Sigmoid colon (tissue), 7 donors: ENCODE measurements at regions of chr13 and their contacts with region 1.

Region 1: DNA sequence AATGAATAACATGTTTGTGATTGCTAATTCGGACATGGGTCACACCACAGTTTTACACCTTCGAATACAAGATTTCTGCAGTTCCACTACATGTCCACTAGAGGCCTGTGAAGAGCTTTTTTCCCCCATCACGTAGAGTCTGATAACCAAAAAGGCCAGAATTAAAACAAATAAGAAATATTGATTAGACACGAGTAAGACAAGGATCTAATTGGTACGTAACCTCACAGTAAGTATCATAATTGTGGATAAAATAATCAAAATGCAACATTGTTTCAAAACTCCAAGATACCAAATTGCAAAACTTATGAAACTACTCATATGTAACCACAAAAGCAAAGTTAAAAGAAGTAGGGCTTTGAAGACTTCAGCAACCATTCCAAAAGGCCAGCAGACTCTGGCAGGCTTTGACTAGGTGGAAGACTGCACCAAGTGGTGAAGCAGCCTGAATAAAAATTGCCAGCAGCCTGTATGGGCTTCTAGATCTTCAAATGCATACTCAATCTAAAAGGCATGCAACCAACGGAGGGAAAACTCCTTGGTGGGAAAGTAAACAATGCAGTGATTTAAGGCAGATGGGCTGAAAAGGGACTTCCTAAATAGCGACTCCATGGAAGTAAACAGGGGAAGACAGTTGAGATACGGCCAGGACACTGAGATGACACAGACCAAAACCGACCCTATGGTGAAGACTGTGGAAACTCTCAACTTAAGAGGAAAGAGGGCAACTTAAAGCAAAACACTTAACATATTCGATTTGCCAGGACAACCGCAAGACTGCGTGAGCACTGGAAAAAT is 56.7 kb downstream of the STARD13 start:
- DNase-seq: no peak
- H3K4me3 ChIP-seq: no peak overlapping the region
- H3K27ac ChIP-seq: peak overlapping the region; percentile 66 to 80 (median 71)
- H3K4me1 ChIP-seq: peaks cover 0 to 65% (median 54%) of the 10 kb centered on the region in 4 donors
- H3K27me3 ChIP-seq: no peaks in the 10 kb centered on the region
- CTCF ChIP-seq: peak; percentile 80 to 87 (median 82)
- EP300 ChIP-seq: no peak
- POLR2A ChIP-seq: no peak

Region 2: DNA sequence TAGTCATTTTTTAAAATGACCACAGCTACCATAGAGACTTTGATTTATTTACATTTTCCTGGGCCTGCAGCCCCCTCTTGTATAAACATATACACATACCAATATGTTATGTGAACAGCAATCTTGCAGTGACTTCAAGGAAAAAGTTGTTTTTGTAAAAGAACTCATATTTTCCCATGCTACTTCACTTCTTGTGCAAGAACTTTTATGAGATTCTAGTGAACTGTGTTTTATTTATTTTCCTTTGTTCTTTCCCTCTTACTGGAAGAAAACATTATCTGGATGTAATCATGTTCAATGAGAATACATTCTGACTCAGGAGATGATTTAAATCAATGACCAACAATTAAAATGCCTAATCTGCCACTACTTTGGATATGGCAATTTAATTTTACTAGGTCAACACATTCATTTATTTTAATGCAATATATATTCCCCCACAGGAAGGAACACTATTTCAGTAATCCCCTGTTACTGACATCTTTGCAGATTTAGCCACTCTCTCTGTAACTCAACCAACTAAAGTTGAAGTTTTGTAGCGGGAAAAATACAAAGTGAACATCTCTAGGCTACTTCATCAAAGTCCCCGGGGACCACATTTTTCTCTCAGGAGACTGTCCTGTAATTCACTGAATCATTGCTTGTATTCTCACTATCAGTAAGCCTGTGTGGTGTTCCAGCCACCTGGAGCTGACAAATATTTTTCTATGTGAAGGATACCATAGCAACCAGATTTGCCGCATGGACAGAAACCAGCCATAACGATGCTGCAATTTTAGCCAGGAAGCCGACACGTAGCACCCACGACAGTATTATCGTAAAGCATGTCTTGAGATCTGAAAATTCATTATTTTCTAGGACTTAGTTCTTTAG is 33.8 kb before region 1 on chr13:
- intact Hi-C with region 1: no loop called
- DNase-seq: no peak
- H3K4me3 ChIP-seq: no peak overlapping the region
- H3K27ac ChIP-seq: peak overlapping the region; percentile 51 to 88 (median 76)
- H3K4me1 ChIP-seq: peaks cover 0 to 99% (median 90%) of the 10 kb centered on the region in 4 donors
- H3K27me3 ChIP-seq: no peaks in the 10 kb centered on the region
- CTCF ChIP-seq: no peak
- EP300 ChIP-seq: peak in 1 of 4 donors; percentile 44
- POLR2A ChIP-seq: no peak

Region 3: GRCh38 chr13:33349986-33350826 is 121.4 kb after region 1 on chr13:
- intact Hi-C with region 1: loop called (anchors 5 kb)
- DNase-seq: peak; percentile 88
- H3K4me3 ChIP-seq: peak overlapping the region; percentile 62 to 81 (median 71)
- H3K27ac ChIP-seq: peak overlapping the region; percentile 88 to 96 (median 93)
- H3K4me1 ChIP-seq: peaks cover 0 to 44% (median 25%) of the 10 kb centered on the region in 4 donors
- H3K27me3 ChIP-seq: no peaks in the 10 kb centered on the region
- CTCF ChIP-seq: no peak
- EP300 ChIP-seq: no peak
- POLR2A ChIP-seq: peak; percentile 4 to 20

Region 4: GRCh38 chr13:33441015-33441414 is 212.2 kb after region 1 on chr13:
- intact Hi-C with region 1: loop called (anchors 10 kb)
- DNase-seq: no peak
- H3K4me3 ChIP-seq: no peak overlapping the region
- H3K27ac ChIP-seq: no peak overlapping the region
- H3K4me1 ChIP-seq: peaks cover 0 to 33% (median 21%) of the 10 kb centered on the region in 4 donors
- H3K27me3 ChIP-seq: no peaks in the 10 kb centered on the region
- CTCF ChIP-seq: no peak
- EP300 ChIP-seq: no peak
- POLR2A ChIP-seq: no peak

Region 5: GRCh38 chr13:33531484-33531883 is 302.6 kb after region 1 on chr13:
- intact Hi-C with region 1: loop called (anchors 5 kb)
- DNase-seq: no peak
- H3K4me3 ChIP-seq: no peak overlapping the region
- H3K27ac ChIP-seq: no peak overlapping the region
- H3K4me1 ChIP-seq: peaks cover 0 to 34% (median 14%) of the 10 kb centered on the region in 4 donors
- H3K27me3 ChIP-seq: no peaks in the 10 kb centered on the region
- CTCF ChIP-seq: no peak
- EP300 ChIP-seq: no peak
- POLR2A ChIP-seq: no peak

Region 6: DNA sequence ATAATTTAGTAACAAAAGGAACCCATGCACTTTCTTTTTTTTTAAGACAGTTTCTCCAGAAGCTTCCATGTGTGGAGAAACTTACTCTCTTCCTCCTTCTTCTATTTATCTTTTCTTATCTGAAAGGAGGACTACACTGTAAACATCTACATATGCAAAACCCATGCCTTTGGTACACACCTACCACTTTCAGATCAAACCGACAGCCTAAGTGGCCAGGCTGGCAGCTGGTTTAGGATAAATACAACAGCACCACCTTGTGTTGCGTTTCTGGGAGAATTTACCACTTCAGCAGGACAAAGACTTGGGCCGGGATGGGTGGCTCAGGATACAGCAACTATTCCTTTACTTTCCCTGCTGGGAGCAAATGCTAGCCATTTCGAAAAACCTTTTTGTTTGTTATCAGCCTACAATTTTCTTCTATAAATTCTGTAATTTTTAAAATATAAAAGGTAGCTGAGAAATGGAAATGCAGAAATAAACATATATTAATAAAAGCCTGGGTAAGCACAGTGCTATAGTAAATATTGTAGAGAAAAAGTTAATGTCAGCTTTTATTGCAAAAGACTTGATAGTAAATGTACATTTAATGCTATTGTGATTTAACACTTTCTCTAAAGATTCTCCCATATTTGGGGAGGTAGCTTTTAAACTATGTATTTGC is 495.1 kb after region 1 on chr13:
- intact Hi-C with region 1: loop called (anchors 10 kb)
- DNase-seq: peak; percentile 90
- H3K4me3 ChIP-seq: no peak overlapping the region
- H3K27ac ChIP-seq: peak overlapping the region; percentile 61 to 72 (median 70)
- H3K4me1 ChIP-seq: peaks cover 0 to 37% (median 28%) of the 10 kb centered on the region in 4 donors
- H3K27me3 ChIP-seq: no peaks in the 10 kb centered on the region
- CTCF ChIP-seq: peak; percentile 55 to 81 (median 68)
- EP300 ChIP-seq: no peak
- POLR2A ChIP-seq: no peak